Thyroid gland (tissue), 4 donors: ENCODE measurements at regions of chr5 and their contacts with region 1.

Region 1: DNA sequence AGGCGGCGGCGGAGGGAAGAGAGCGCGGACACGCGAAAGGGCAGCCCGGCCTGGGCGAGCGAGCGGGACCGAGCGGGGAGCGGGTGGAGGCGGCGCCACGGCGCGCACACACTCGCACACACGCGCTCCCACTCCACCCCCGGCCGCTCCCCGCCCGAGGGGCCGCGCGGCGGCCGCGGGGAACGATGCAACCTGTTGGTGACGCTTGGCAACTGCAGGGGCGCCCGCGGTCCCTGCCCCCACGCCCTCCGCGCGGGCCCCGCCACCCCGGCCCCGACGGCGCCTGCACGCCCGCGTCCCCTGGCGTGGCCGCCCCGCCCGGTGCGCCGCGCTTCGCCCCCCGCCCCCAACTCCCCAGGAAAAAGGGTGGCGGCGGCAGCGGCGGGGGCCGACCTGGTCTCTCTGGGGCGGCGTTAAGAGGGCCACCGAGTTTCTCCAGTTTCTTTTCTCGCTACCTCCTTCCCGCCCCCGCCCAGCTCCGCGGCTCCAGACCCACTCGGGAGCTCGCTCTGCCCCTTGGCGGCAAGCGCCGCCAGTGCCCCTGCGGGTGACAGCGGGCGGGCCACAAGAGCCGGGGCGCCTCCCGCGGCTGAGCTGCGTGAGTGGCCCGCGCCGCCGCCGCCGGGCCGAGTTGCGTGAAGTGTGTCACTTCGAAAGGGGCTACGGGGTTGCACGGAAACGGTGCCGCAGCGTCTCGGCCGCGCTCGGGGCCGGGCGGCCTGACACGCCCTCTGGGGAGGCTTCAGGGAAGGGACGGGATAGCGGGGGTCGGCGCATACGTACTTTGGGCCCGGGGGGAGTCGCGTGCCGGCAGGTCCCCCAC is at the start of gene NR3C1:
- DNase-seq: peak; percentile 86 to 89
- H3K4me3 ChIP-seq: peak within 1 kb of the TSS; percentile 77 to 88 (median 81)
- H3K27ac ChIP-seq: peak within 1 kb of the TSS; percentile 93 to 100 (median 98)
- H3K4me1 ChIP-seq: peaks cover 22 to 29% of the 10 kb centered on the region in 2 donors
- H3K27me3 ChIP-seq: no peaks in the 10 kb centered on the region
- CTCF ChIP-seq: peak in 4 of 6 experiments; percentile 24 to 89 (median 62)
- POLR2A ChIP-seq: peak in 1 of 2 donors; percentile 69
- total RNA-seq, gene NR3C1: 59.4 to 67.7 (median 65.3) TPM

Region 2: DNA sequence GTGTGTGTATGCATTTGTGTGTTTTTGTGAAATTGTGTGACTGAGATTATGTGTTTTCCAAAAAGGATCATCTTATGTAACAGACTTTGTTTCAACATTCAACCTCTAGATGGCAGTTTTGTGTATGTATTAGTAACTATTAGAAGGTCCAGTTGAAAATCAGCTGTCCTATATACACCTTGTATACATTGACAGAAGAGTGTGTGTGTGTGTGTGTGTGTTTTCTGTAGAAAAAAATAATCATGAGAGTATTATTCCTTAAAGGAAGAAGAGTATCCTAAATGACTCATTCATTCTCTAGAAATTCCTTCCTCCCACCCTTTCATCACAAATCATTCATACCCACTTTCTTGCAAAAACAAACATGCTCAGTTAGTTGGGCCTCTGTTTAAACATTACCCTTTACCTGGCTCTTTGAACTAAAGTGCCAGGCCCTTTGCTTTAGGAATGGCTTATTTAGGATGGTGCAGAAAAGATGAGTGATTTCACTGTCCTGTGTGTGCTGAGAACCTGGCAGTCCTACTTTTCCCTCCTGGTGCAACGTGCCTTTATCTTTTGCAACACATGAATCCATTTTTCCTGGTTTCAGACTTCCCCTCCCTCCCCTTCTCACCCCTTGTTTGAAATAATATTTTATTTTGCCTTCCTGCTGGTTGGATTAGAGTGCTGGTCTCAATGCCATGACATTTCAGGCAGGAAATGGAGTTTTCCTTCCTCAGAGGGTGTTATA is 481.4 kb before region 1 on chr5:
- intact Hi-C with region 1: loop called (anchors 10 kb)
- DNase-seq: no peak
- H3K4me3 ChIP-seq: no peak overlapping the region
- H3K27ac ChIP-seq: peak overlapping the region in 1 of 3 donors; percentile 29
- H3K4me1 ChIP-seq: peaks cover 7 to 17% of the 10 kb centered on the region in 2 donors
- H3K27me3 ChIP-seq: no peaks in the 10 kb centered on the region
- CTCF ChIP-seq: peak in 4 of 6 experiments; percentile 18 to 63 (median 55)
- POLR2A ChIP-seq: no peak

Region 3: DNA sequence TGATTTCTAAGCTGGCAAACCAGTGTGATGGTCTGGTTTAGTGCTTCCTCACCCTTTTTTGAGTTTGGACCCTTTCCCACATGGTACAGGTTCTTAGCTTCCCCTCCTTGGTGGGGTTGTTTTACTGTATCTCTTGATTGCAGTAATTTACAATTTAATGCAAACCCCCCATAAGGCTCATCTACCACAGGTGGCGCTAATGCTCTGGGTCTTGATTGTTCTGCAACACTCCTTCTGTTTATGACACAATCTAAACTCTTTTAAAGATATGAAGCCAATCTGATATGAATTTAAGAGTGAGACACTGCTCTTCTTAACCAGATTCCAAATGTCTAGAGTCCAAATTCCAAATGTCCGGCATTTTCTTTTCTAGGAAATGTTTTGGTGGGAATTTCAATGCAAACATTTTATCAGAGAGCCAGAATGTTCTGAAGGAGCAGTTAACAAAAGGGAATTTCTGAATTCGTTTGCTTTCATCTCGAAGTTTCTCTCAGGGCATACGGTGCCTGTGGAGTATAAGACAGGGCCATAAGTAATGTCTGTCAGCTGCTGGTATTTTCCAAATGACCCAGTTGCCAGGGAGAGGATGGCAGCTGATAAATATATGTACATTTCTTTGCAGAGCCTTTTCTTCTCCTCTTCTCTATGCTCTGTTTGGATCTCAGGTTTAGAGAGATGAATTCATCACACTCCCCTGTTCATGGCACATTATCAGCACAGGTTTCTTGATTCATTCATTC is 386.9 kb before region 1 on chr5:
- intact Hi-C with region 1: loop called (anchors 10 kb)
- DNase-seq: peak in 1 of 2 donors; percentile 10
- H3K4me3 ChIP-seq: no peak overlapping the region
- H3K27ac ChIP-seq: no peak overlapping the region
- H3K4me1 ChIP-seq: no peaks in the 10 kb centered on the region
- H3K27me3 ChIP-seq: no peaks in the 10 kb centered on the region
- CTCF ChIP-seq: peak in 1 of 6 experiments; percentile 25
- POLR2A ChIP-seq: no peak

Region 4: GRCh38 chr5:143258559-143259253 is 145.1 kb before region 1 on chr5:
- intact Hi-C with region 1: no loop called
- DNase-seq: no peak
- H3K4me3 ChIP-seq: no peak overlapping the region
- H3K27ac ChIP-seq: no peak overlapping the region
- H3K4me1 ChIP-seq: no peaks in the 10 kb centered on the region
- H3K27me3 ChIP-seq: no peaks in the 10 kb centered on the region
- CTCF ChIP-seq: no peak
- POLR2A ChIP-seq: no peak

Region 5: DNA sequence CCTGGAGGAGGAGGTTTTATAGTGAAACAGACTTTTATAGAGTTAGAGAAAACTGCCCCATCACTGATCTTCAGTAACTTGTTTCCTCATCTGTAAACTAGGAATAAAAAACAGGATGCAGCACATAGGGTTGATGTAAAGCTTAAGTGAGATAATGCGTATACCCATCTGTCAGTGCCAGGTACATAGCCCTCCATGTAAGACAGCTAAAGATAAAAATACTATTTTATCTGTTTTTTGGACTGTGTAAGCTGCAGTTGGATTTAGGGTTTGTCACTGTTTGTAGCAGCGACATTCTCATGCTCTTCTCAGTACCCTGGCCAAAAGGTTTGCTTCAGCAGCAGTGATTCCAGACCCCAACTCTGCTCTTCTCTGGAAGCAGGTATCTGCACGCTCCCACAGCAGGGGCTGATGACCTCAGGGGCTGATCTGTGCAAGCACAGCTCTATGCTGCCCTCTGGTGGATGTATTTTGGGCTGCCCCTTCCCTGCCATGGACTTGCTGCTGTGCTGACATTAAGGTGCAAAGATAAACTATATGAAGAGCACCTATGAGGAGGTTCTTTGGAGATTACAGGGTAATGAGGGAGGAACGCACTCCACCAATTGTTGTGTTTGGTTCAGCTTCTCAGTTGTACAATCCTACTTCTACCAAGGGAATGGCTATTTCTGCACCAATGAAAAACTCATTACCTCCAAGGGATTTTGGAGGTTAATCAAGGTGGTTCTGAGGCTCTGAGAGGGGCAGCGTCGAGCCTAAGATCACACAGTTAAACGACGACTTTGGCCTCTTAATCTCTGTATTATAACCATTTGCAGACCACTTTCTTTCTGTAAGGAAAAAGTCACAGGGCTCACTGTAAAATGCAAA is 421.3 kb after region 1 on chr5:
- intact Hi-C with region 1: loop called (anchors 10 kb)
- DNase-seq: peak; percentile 84 to 85
- H3K4me3 ChIP-seq: no peak overlapping the region
- H3K27ac ChIP-seq: no peak overlapping the region
- H3K4me1 ChIP-seq: peaks cover 0 to 3% of the 10 kb centered on the region in 2 donors
- H3K27me3 ChIP-seq: no peaks in the 10 kb centered on the region
- CTCF ChIP-seq: peak; percentile 77 to 97 (median 92)
- POLR2A ChIP-seq: no peak